Posterior vena cava (tissue), 2 donors: ENCODE measurements at regions of chr5 and their contacts with region 1.

Region 1: DNA sequence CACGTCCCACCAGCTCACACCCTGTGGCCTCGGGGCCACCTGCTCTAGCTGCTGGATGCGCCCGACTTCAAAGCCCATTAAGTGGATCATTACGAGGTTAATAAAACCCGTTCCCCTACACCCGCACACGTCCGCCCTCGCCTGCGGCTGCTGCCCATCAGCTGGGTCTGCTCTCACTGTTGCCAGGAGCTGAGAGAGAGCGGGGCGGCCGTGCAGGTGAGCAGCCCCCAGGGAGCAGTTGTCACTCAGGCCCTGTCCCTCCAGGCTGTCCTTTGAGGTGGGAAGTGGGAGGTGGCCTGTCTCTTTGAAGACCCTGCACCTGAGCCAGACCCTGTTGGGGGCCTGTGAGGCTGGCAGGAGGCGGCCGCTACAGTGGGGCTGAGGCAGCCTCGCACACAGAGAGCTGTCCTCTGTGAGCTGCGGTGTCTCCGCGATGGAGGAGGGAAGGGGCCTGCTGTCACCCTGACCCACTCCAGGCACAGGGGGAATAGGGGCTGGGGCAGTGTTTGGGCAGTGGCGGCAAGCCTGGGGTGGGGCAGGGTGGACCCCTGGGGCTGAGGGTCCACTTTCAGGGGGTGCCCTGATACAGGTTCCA is 12.8 kb upstream of the UNC5A start:
- DNase-seq: no peak

Region 2: DNA sequence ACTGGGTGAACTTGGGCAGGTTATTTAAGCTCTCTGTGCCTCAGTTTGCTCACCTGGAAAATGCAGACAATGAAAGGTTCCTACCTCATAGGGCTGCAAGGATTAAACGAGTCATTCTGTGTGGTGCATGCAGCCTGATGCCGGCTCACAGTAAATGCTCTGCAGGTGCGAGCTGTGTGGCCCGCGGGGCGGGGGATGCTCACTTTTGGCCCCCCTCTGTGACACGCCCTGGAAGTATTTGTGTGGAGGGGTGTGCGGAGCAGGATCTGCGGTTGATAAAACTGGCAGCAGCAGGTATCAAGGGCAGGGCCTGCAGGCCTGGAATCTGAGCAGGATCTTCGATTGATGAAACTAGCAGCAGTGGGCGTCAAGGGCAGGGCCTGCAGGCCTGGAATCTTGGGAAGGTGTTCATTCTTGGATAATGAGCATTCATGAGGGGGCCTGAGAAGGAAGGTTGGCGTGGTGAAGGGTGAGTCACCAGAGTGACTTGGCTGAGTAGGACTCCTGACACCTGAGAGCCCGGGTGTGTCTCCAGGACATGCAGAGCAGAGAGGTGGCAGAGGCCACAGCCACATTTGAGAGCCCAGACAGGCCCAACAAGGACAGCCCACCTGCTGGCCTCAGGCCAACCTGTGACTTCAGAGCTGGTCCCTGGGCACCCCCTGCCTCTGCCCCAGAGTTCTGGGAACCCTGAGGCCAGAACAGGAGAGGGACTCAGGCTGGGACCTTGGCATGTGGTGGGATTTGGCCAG is 24.7 kb after region 1 on chr5:
- intact Hi-C with region 1: no loop called
- DNase-seq: no peak

Region 3: GRCh38 chr5:176837707-176838115 is 40.2 kb after region 1 on chr5:
- intact Hi-C with region 1: loop called in 1 of 2 experiments (anchors 1 kb)
- DNase-seq: peak; percentile 96